H1 (cell line): ENCODE measurements at regions of chr17 and their contacts with region 1.

Region 1: GRCh38 chr17:58303971-58304725 is 23.4 kb upstream of the MPO start:
- DNase-seq: peak; percentile 41 to 84
- H3K4me3 ChIP-seq: no peak overlapping the region
- H3K27ac ChIP-seq: peak overlapping the region; percentile 16; the same call in 1 of the 2 replicates
- H3K4me1 ChIP-seq: peaks cover 0 to 15% (median 10%) of the 10 kb centered on the region in 4 experiments; a peak in 5 of 7 replicates
- H3K27me3 ChIP-seq: no peaks in the 10 kb centered on the region
- CTCF ChIP-seq: peak; percentile 82 to 97 (median 93)
- EP300 ChIP-seq: no peak
- POLR2A ChIP-seq: no peak
- RAD21 ChIP-seq: peak; percentile 55 to 64

Region 2: GRCh38 chr17:58277107-58277801 is 26.9 kb before region 1 on chr17:
- CTCF ChIA-PET with region 1: interaction called, 75 read pairs
- POLR2A ChIA-PET with region 1: interaction called, 4 read pairs
- DNase-seq: no peak
- H3K4me3 ChIP-seq: no peak overlapping the region
- H3K27ac ChIP-seq: no peak overlapping the region
- H3K4me1 ChIP-seq: peaks cover 0 to 3% (median 0%) of the 10 kb centered on the region in 4 experiments; a peak in 1 of 7 replicates
- H3K27me3 ChIP-seq: peaks cover 0 to 8% (median 0%) of the 10 kb centered on the region in 4 experiments; a peak in 3 of 7 replicates
- CTCF ChIP-seq: peak in 2 of 3 experiments; percentile 54 to 67; a peak in 3 of 4 replicates
- EP300 ChIP-seq: no peak
- POLR2A ChIP-seq: no peak
- RAD21 ChIP-seq: peak; percentile 65 to 73

Region 3: GRCh38 chr17:58289869-58290268 is 14.3 kb before region 1 on chr17:
- CTCF ChIA-PET with region 1: interaction called, 58 read pairs
- POLR2A ChIA-PET with region 1: interaction called, 9 read pairs
- DNase-seq: peak in 1 of 2 experiments; percentile 3
- H3K4me3 ChIP-seq: no peak overlapping the region
- H3K27ac ChIP-seq: no peak overlapping the region
- H3K4me1 ChIP-seq: no peaks in the 10 kb centered on the region; a peak in 1 of 7 replicates
- H3K27me3 ChIP-seq: peaks cover 0 to 2% (median 0%) of the 10 kb centered on the region in 4 experiments; a peak in 1 of 7 replicates
- CTCF ChIP-seq: no peak
- EP300 ChIP-seq: no peak
- POLR2A ChIP-seq: no peak
- RAD21 ChIP-seq: no peak

Region 4: GRCh38 chr17:58328195-58329034 is 24.3 kb after region 1 on chr17 and contains the start of gene TSPOAP1:
- CTCF ChIA-PET with region 1: interaction called, 384 read pairs
- POLR2A ChIA-PET with region 1: interaction called, 6 read pairs
- DNase-seq: peak in 1 of 2 experiments; percentile 84
- H3K4me3 ChIP-seq: peak within 1 kb of the TSS in 3 of 4 experiments; percentile 7 to 40 (median 21); a peak in 4 of 8 replicates
- H3K27ac ChIP-seq: no peak within 1 kb of the TSS
- H3K4me1 ChIP-seq: peaks cover 0 to 42% (median 29%) of the 10 kb centered on the region in 4 experiments; a peak in 6 of 7 replicates
- H3K27me3 ChIP-seq: peaks cover 0 to 16% (median 10%) of the 10 kb centered on the region in 4 experiments; a peak in 5 of 7 replicates
- CTCF ChIP-seq: no peak
- EP300 ChIP-seq: no peak
- POLR2A ChIP-seq: no peak
- RAD21 ChIP-seq: no peak
- total RNA-seq, gene TSPOAP1: 9.2 and 9.8 TPM in 2 replicates

Region 5: DNA sequence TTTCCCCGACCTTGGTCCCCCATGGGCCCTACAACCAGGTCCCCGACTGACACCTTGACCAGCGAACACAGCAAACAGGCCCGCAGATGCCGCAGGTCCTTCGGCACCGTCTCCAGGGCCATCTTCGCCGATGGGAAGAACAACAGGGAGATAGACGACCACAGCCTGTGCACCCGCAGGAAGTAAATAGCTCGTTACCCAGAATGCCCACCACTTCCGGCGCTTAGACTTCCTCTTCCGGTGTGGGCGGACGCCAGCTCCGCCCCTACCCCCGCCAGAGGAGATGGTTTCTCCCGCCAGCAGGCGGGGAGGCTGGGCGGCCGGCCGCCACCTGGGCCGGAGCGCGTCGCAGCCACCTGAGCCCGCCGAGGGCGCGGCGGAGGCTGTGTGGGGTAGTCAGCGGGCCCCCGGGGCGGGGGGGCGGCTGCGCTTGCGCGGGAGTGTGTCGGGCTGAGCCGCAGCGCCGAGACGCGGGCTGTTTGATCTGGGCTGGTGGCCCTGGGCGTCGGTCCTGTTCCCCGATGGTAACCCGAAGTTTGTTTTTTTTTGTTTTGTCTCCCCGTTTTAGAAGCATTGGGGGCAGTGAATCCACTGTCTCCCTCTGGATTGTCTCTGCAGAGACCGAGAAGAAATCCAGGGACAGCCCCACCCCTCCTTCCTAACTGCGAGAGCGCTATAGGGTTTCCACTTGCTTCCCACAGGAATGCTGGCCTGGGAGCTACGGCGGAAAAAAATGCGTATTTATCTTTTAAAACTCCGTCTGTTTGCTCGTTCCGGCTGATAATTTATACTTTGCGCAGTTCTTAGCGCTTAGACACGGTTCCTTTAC is 48.1 kb after region 1 on chr17 and contains the start of gene SUPT4H1:
- CTCF ChIA-PET with region 1: interaction called, 384 read pairs
- POLR2A ChIA-PET with region 1: interaction called, 9 read pairs
- DNase-seq: peak; percentile 80 to 88
- H3K4me3 ChIP-seq: peak within 1 kb of the TSS; percentile 90 to 96 (median 94)
- H3K27ac ChIP-seq: peak within 1 kb of the TSS; percentile 88
- H3K4me1 ChIP-seq: peaks cover 0 to 2% (median 0%) of the 10 kb centered on the region in 4 experiments; a peak in 1 of 7 replicates
- H3K27me3 ChIP-seq: no peaks in the 10 kb centered on the region
- CTCF ChIP-seq: peak in 1 of 3 experiments; percentile 10; a peak in 1 of 4 replicates
- EP300 ChIP-seq: peak in 1 of 2 experiments; percentile 97; a peak in 2 of 3 replicates
- POLR2A ChIP-seq: peak; percentile 68 to 86
- RAD21 ChIP-seq: peak in 1 of 2 experiments; percentile 22; a peak in 3 of 4 replicates
- total RNA-seq, gene SUPT4H1: 103 and 112 TPM in 2 replicates

Region 6: DNA sequence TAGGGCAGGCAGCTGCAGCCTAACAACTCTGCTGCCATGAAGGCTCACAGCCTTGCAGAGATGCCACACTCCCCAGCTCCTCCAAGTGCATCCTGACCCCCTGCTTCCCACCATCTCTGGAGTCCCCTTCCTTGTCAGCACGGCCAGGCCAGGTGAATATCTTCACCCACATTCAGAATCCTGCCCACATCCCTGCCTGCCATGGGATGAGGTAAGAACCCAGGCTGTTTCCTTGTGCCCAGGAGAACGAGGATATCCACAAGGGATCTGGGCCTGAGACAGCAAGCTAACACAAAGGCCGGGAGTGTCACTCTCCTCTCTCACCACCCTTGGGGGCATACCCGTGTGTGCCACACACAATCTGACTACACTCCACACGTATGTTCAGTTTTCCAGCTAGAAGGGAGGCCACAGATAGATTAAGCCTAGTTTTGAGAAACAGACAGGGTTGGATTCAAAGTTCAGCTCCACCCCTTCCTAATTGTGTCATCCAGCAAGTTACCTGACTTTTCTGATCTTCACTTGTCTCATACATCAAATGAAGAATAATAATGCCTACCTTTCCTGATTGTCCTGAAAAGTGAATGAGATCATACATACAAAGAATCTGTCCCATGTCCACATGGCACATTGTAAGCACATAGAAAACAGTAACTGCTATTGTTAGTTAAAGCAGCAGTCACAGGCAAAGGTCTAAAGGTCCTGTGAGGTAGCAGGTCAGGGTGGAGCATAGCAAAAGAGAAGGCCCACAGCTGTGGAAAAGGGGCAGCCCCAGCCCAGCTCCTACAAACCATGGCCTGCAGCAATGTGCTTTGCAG is 65.3 kb after region 1 on chr17:
- CTCF ChIA-PET with region 1: interaction called, 12 read pairs
- POLR2A ChIA-PET with region 1: no interaction called
- DNase-seq: no peak
- H3K4me3 ChIP-seq: no peak overlapping the region
- H3K27ac ChIP-seq: no peak overlapping the region
- H3K4me1 ChIP-seq: no peaks in the 10 kb centered on the region
- H3K27me3 ChIP-seq: no peaks in the 10 kb centered on the region
- CTCF ChIP-seq: no peak
- EP300 ChIP-seq: no peak
- POLR2A ChIP-seq: no peak
- RAD21 ChIP-seq: no peak

Region 7: DNA sequence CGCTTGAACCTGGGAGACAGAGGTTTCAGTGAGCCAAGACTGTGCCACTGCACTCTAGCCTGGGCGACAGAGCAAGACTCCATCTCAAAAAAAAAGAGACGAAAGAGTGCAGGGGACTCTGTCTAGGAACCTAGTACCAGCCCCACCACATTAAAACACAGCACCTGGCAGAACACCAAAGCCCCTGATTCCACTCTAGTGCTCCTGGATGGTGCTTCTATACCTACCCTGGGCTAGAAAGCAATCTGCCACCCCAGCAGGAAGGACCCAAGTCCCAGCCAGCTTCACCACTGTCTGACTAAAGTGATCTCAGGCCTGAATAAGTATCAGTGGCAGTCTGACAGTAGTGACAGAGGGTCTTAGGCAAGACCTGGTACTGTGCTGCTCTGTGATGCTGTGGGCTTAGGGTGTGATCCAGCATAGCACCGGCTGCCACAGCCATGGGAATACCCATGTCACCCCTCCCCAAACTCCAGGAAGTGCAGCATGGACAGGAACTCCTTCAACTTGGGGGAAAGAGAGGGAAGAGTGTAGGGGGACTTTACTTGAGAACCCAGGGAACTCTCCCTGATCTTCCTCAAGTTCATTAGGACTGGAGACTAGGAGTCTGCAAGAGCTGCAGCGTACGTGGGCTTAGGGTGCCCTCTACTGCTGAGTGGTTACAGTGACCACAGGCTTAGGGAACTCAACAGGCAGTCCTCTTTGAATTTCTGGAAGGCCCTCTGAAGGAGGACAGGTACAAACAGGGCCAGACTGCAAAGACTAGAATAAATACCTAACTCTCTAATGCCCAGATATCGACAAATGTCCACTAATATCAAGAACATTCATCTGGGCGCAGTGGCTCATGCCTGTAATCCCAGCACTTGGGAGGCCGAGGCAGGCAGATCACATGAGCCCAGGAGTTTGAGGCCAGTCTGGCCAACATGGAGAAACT is 143.2 kb after region 1 on chr17:
- CTCF ChIA-PET with region 1: interaction called, 75 read pairs
- POLR2A ChIA-PET with region 1: no interaction called
- DNase-seq: peak; percentile 70 to 83
- H3K4me3 ChIP-seq: no peak overlapping the region
- H3K27ac ChIP-seq: no peak overlapping the region
- H3K4me1 ChIP-seq: peaks cover 3 to 9% (median 4%) of the 10 kb centered on the region in 4 experiments; a peak in 6 of 7 replicates
- H3K27me3 ChIP-seq: no peaks in the 10 kb centered on the region
- CTCF ChIP-seq: peak; percentile 81 to 96 (median 96)
- EP300 ChIP-seq: 0 out of 3 replicates have a peak, but pooled peaks of 1 of the 2 experiments have one; percentile 5
- POLR2A ChIP-seq: no peak
- RAD21 ChIP-seq: peak; percentile 99